Aorta (tissue), 5 donors: ENCODE measurements at regions of chr1 and their contacts with region 1.

Region 1: DNA sequence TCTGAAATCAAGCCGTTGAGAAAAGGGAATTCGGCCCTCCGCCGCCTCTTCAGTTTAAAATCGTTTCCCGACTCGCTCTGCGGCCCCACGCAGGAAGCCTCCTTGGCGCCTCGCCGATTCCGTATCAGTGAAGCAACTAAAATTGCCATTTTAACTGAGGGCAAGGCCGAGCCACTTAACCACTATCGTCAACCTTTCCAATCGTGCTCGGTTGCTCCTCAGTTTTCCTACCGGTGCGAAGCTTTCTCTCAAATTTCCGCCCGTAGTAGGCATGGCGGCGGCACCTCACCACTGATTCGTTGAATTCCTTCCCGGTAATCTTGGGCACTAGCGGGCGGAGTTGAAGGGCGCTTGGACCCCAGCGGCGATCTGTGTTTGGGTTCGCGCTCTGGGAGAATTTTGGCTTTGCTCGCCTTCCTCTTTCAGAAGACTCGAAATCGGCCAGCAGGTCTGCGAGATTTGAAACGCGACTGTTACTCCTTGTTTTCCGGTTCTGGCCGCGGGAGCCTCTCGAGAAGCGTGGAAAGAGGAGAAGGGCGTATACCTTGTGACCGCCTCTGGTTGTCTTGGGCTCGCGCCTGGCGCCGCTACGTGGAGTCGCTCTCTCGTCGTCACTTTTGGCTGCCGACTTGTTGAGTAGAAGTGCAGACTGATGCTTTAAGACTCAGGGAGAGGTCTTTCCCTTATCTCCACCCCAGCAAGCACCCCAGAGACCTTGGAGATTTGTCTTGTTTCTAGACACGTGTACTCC is at the starts of genes CENPL and DARS2:
- DNase-seq: peak; percentile 98
- ATAC-seq: peak; percentile 100
- H3K4me3 ChIP-seq: peak within 1 kb of the TSS; percentile 53 to 98
- H3K27ac ChIP-seq: peak within 1 kb of the TSS; percentile 46 to 92
- H3K4me1 ChIP-seq: peaks cover 0 to 2% of the 10 kb centered on the region in 2 donors
- H3K27me3 ChIP-seq: no peaks in the 10 kb centered on the region
- total RNA-seq, gene CENPL: 4.5 to 4.8 TPM
- total RNA-seq, gene DARS2: 8.6 to 10.0 TPM

Region 2: GRCh38 chr1:173418107-173418985 is 406.2 kb before region 1 on chr1:
- intact Hi-C with region 1: loop called in 1 of 2 experiments (anchors 5 kb)
- DNase-seq: no peak
- ATAC-seq: no peak
- H3K4me3 ChIP-seq: no peak overlapping the region
- H3K27ac ChIP-seq: no peak overlapping the region
- H3K4me1 ChIP-seq: no peaks in the 10 kb centered on the region
- H3K27me3 ChIP-seq: no peaks in the 10 kb centered on the region

Region 3: GRCh38 chr1:173476664-173477285 is 347.7 kb before region 1 on chr1:
- intact Hi-C with region 1: loop called in 1 of 2 experiments (anchors 5 kb)
- DNase-seq: peak; percentile 95 to 96
- ATAC-seq: peak; percentile 94
- H3K4me3 ChIP-seq: peak overlapping the region; percentile 4 to 83
- H3K27ac ChIP-seq: peak overlapping the region; percentile 20 to 52
- H3K4me1 ChIP-seq: no peaks in the 10 kb centered on the region
- H3K27me3 ChIP-seq: no peaks in the 10 kb centered on the region